ENCODE measurements at regions of chr1 and their contacts with region 1.

Region 1: GRCh38 chr1:1890506-1891348 is at the start of gene GNB1:
- DNase-seq: peak; percentile 86 to 95 (median 90)
- H3K4me3 ChIP-seq: peak within 1 kb of the TSS; percentile 82
- H3K27ac ChIP-seq: peak within 1 kb of the TSS; percentile 92 to 95
- H3K4me1 ChIP-seq: peaks cover 23% of the 10 kb centered on the region
- H3K27me3 ChIP-seq: no peaks in the 10 kb centered on the region
- CTCF ChIP-seq: peak in 1 of 3 donors; percentile 7
- EP300 ChIP-seq: no peak
- POLR2A ChIP-seq: peak; percentile 78
- total RNA-seq, gene GNB1: 92.9 to 314 (median 255) TPM

Region 2: DNA sequence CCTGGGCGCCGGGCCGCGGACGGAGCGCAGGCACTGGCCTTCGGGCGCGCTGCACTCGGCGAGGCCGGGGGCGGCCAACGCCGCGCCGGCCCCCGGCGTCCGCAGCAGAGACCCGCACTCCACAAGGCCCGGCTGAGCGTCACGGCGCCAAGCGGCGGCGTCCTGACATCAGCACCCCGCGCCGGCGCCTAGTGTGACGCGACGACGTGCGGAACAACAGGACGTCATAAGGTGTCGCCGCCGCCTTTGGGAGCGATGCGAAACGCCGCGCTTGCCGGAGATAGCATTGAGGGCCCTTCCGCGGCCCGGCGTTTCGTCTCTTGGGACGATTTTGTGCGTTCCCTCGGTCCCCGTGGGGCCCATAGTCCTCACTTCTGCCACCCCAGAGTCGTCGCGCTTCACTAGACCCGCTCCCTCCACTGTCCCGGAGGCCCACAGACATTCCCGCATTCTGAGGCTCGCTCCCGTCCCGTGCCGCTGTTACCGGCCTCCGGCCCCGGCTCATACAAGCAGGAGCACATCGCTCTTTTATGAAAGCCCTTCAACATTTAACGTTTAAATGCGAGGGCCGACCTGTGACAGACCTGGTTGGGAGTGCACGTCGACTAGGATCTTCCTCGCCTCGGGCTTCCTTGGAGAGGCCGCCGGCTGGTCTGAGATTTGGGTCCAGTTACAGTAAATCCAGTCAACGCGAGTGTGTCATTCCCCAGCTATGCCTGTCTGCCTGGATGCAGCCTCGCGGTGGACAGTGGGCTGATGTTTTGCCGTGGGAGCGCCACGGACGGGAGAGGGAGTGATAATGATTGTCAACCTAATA is 315.8 kb before region 1 on chr1 and contains the start of gene SSU72:
- intact Hi-C with region 1: loop called in 1 of 4 experiments (anchors 2 kb)
- DNase-seq: peak; percentile 89 to 96 (median 93)
- H3K4me3 ChIP-seq: peak within 1 kb of the TSS; percentile 63
- H3K27ac ChIP-seq: peak within 1 kb of the TSS; percentile 97 to 99
- H3K4me1 ChIP-seq: peaks cover 4% of the 10 kb centered on the region
- H3K27me3 ChIP-seq: no peaks in the 10 kb centered on the region
- CTCF ChIP-seq: peak in 1 of 3 donors; percentile 24
- EP300 ChIP-seq: no peak
- POLR2A ChIP-seq: peak; percentile 96
- total RNA-seq, gene SSU72: 91.9 to 119 (median 113) TPM

Region 3: GRCh38 chr1:1758692-1759455 is 131.9 kb before region 1 on chr1:
- intact Hi-C with region 1: loop called in 1 of 4 experiments (anchors 10 kb)
- DNase-seq: peak in 1 of 5 donors; percentile 46
- H3K4me3 ChIP-seq: no peak overlapping the region
- H3K27ac ChIP-seq: no peak overlapping the region
- H3K4me1 ChIP-seq: no peaks in the 10 kb centered on the region
- H3K27me3 ChIP-seq: no peaks in the 10 kb centered on the region
- CTCF ChIP-seq: no peak
- EP300 ChIP-seq: no peak
- POLR2A ChIP-seq: no peak

Region 4: DNA sequence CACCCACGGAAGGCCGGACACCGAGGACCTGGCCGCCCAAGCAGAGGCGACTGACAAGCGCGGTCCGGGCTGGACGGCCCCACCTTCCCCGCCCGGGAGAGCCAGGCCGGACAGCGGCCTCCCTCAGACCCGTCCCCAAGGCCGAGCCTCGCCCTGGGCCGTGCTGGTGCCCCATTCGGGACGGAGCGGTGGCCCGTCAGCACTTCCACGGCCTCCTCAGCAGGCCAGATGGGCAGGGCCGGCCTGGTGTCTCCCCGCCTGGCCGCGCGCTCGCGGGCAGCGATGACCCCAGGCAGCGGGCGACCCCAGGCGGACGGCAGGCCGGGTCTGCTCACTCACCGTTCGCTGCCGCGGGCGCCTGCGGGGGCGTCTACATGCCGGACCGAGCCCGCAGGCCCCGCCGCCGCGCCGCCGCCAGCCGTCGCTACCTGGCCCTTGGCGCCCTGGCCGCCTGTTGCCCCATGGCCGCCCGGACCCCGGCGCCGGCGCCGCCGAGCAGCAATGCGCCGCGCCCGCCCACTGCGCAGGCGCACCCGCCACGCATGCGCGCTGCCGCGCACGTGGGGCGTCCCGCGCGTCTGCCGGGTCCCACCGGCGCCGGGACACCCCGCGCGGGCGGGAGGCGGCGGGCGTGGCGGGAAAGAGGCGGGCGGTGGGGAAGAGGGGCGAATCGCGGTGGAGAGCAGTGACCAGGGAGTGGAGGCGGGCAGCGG is 112.6 kb before region 1 on chr1 and contains the start of gene NADK:
- intact Hi-C with region 1: loop called in 2 of 4 experiments (anchors 5 to 10 kb)
- DNase-seq: peak; percentile 64 to 82 (median 69)
- H3K4me3 ChIP-seq: peak within 1 kb of the TSS; percentile 74
- H3K27ac ChIP-seq: peak within 1 kb of the TSS; percentile 80 to 95
- H3K4me1 ChIP-seq: peaks cover 50% of the 10 kb centered on the region
- H3K27me3 ChIP-seq: no peaks in the 10 kb centered on the region
- CTCF ChIP-seq: no peak
- EP300 ChIP-seq: no peak
- POLR2A ChIP-seq: peak; percentile 69
- total RNA-seq, gene NADK: 45.1 to 76.0 (median 62.7) TPM

Region 5: DNA sequence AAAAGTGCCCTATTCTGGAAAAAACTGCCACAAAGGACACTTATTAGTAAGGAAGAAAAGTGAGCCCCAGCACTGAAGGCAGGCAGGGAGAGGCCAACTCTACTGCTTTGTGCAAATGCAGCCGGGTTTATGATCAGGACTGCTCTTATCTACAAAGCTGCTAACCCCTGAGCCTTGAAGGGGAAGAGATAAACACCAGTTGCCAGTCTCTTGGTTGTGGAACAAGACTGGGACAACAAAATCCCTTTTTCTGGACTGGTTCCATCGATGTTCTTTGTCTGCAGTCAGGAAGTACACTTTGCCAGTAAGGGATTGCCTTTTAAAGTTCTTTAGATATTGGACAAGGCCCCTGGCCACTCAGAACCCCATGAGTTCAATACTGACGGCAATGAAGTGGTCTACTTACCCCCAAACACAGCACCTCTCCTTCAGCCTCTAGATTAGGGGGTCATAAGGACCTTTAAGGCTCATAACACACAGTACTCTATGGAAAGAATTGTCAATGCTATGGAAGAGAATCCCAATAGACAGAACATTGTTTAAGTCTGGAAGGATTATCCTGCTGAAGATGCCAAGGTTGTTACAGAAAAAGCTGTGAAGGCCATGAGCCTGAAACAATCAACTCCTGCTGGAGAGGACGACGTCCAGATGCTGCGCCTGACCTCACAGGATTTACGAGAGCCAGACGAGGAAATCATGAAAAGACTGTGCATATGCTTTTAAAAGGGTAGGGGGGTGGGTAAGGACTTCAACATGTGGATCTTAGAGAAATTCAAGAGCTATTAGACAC is 43.5 kb before region 1 on chr1:
- intact Hi-C with region 1: no loop called
- DNase-seq: no peak
- H3K4me3 ChIP-seq: no peak overlapping the region
- H3K27ac ChIP-seq: peak overlapping the region in 1 of 2 donors; percentile 40
- H3K4me1 ChIP-seq: peaks cover 21% of the 10 kb centered on the region
- H3K27me3 ChIP-seq: no peaks in the 10 kb centered on the region
- CTCF ChIP-seq: no peak
- EP300 ChIP-seq: no peak
- POLR2A ChIP-seq: no peak

Region 6: GRCh38 chr1:1966071-1966740 is 75.5 kb after region 1 on chr1:
- intact Hi-C with region 1: no loop called
- DNase-seq: no peak
- H3K4me3 ChIP-seq: no peak overlapping the region
- H3K27ac ChIP-seq: no peak overlapping the region
- H3K4me1 ChIP-seq: no peaks in the 10 kb centered on the region
- H3K27me3 ChIP-seq: no peaks in the 10 kb centered on the region
- CTCF ChIP-seq: no peak
- EP300 ChIP-seq: no peak
- POLR2A ChIP-seq: no peak

Measured in ovary (tissue), 10 donors.